SK-N-SH (cell line): ENCODE measurements at regions of chr1 and their contacts with region 1.

Region 1: GRCh38 chr1:220690140-220691025 is at the start of gene C1orf115:
- DNase-seq: peak; percentile 98
- H3K4me3 ChIP-seq: peak within 1 kb of the TSS; percentile 72 to 80
- H3K27ac ChIP-seq: no peak within 1 kb of the TSS
- H3K4me1 ChIP-seq: peaks cover 0 to 8% of the 10 kb centered on the region in 2 experiments; a peak in 1 of 4 replicates
- H3K27me3 ChIP-seq: no peaks in the 10 kb centered on the region
- CTCF ChIP-seq: peak; percentile 96
- EP300 ChIP-seq: no peak
- RAD21 ChIP-seq: peak; percentile 46
- polyA plus RNA-seq, gene C1orf115: 4.0 and 4.2 TPM in 2 replicates

Region 2: GRCh38 chr1:220631238-220631832 is 59.0 kb before region 1 on chr1:
- CTCF ChIA-PET with region 1: no interaction called
- POLR2A ChIA-PET with region 1: no interaction called
- DNase-seq: no peak
- H3K4me3 ChIP-seq: no peak overlapping the region
- H3K27ac ChIP-seq: no peak overlapping the region
- H3K4me1 ChIP-seq: no peaks in the 10 kb centered on the region
- H3K27me3 ChIP-seq: no peaks in the 10 kb centered on the region
- CTCF ChIP-seq: no peak
- EP300 ChIP-seq: no peak
- RAD21 ChIP-seq: no peak

Region 3: GRCh38 chr1:220700556-220701179 is 10.3 kb after region 1 on chr1:
- CTCF ChIA-PET with region 1: interaction called, 11 read pairs
- POLR2A ChIA-PET with region 1: no interaction called
- DNase-seq: no peak
- H3K4me3 ChIP-seq: no peak overlapping the region
- H3K27ac ChIP-seq: no peak overlapping the region
- H3K4me1 ChIP-seq: no peaks in the 10 kb centered on the region; a peak in 1 of 4 replicates
- H3K27me3 ChIP-seq: no peaks in the 10 kb centered on the region
- CTCF ChIP-seq: no peak
- EP300 ChIP-seq: no peak
- RAD21 ChIP-seq: no peak

Region 4: DNA sequence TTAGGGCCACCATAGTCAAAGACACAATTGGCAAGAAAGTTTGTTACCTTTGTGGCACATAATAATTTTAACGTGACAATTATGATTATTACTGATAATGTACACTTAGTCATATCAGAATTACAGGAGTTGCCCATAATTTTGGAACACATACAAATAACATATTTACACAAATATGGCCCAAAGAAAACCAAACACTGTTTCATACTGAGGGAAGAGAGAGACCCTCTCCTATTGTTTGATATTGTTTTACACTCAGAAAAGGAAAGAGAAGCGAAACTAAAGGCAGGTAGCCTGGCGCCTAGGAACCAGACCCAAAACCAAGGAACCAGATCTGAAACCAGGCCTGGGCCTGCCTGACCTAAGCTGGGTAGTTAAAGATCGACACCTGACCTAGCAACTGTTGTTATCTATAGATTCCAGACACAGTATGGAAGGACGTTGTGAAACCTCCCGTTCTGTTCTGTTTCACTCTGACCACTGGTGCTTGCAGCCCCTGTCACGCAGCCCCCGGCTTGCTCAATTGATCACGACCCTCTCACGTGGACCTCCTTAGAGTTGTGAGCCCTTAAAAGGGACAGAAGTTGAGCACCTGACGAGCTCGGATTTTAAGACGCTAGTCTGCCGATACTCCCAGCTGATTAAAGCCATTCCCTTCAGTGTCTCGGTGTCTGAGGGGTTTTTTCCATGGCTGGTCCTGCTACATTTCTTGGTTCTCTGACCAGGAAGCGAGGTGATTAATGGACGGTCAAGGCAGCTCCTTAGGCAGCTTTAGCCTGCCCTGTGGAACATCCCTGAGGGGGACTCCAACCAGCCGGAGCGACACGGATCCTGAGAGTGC is 27.6 kb after region 1 on chr1:
- CTCF ChIA-PET with region 1: no interaction called
- POLR2A ChIA-PET with region 1: no interaction called
- DNase-seq: no peak
- H3K4me3 ChIP-seq: no peak overlapping the region
- H3K27ac ChIP-seq: no peak overlapping the region
- H3K4me1 ChIP-seq: no peaks in the 10 kb centered on the region
- H3K27me3 ChIP-seq: no peaks in the 10 kb centered on the region
- CTCF ChIP-seq: no peak
- EP300 ChIP-seq: no peak
- RAD21 ChIP-seq: no peak